Activated CD4-positive, alpha-beta T cell treated with anti-CD3 and anti-CD28 coated beads for 36 hours (primary cell): ENCODE measurements at regions of chr17 and their contacts with region 1.

Region 1: DNA sequence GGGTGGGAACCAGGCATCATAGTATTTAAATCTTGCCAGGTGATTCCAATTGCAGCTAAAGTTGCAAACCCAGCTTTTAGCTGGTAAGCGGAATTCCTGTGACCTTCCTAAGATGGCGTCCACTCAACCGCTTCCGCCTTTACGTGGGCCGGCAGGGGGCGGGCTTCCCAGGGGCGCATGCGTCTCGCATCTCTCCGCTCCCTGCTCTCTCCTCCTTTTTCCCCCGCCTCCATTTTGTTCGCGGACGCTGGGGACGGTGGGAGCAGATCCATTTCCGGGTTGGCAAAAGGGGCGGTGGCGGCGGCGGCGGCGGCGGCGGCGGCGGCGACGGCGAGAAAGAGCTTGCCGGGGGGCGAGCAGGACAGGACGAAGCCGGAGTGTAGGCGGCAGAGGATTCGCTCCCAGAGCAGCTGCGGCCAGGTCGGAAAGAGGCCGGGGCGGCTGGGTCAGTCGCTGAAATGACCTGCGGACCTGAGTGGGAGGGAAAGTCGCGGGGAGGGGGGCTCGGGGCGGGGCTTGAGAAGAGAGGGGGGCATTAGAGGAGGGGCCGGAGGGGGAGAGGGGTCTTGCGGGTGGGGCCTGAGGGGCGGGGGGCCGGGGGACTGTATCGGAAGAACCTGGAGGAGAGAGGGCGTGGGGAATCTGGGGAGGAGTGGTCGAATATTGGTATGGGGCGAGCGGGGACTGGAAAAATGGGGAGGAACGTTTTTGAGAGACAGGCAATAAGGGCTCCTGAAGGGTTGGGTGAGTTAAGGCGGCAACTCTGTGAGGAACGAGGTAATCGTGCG is at the start of gene WIPF2:
- DNase-seq: peak; percentile 98
- ATAC-seq: peak; percentile 96
- H3K4me3 Mint-ChIP-seq: peak within 1 kb of the TSS; percentile 89
- H3K27ac Mint-ChIP-seq: peak within 1 kb of the TSS; percentile 100
- H3K4me1 Mint-ChIP-seq: peaks cover 26% of the 10 kb centered on the region
- H3K27me3 Mint-ChIP-seq: no peaks in the 10 kb centered on the region
- total RNA-seq, gene WIPF2: 18.4 to 23.6 TPM

Region 2: DNA sequence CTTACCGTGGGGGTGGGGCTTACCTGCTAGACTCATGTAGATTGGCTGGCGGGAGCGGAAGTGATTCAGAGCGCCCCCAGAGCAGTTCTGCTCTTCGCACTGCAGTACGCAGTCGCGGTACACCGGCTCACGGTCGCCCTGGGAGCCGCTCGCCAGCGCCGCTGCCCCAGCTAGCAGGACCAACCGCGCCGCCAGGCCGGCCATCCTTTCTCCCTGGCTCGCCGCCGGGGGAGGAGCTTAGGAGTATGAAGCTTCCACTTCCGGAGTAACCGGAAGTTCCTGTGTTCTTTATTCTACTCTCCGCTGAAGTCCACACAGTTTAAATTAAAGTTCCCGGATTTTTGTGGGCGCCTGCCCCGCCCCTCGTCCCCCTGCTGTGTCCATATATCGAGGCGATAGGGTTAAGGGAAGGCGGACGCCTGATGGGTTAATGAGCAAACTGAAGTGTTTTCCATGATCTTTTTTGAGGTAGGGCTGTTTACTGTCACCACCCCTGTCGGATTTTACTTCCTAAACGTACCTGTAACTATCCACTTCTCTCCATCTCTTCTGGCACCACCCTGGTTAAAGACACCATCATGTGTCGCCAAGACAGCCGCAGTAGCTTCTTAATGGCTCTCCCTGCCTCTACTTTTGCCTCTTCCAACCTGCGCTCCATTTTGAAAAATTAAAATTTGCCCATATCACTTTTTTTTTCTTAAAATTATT is 531.3 kb before region 1 on chr17 and contains the start of gene PGAP3:
- CTCF ChIA-PET with region 1: no interaction called
- POLR2A ChIA-PET with region 1: no interaction called
- intact Hi-C with region 1: loop called in 1 of 2 experiments (anchors 5 kb)
- DNase-seq: peak; percentile 92
- ATAC-seq: peak; percentile 96
- H3K4me3 Mint-ChIP-seq: peak within 1 kb of the TSS; percentile 86
- H3K27ac Mint-ChIP-seq: peak within 1 kb of the TSS; percentile 95
- H3K4me1 Mint-ChIP-seq: peaks cover 19% of the 10 kb centered on the region
- H3K27me3 Mint-ChIP-seq: no peaks in the 10 kb centered on the region
- total RNA-seq, gene PGAP3: 8.6 to 11.9 TPM

Region 3: DNA sequence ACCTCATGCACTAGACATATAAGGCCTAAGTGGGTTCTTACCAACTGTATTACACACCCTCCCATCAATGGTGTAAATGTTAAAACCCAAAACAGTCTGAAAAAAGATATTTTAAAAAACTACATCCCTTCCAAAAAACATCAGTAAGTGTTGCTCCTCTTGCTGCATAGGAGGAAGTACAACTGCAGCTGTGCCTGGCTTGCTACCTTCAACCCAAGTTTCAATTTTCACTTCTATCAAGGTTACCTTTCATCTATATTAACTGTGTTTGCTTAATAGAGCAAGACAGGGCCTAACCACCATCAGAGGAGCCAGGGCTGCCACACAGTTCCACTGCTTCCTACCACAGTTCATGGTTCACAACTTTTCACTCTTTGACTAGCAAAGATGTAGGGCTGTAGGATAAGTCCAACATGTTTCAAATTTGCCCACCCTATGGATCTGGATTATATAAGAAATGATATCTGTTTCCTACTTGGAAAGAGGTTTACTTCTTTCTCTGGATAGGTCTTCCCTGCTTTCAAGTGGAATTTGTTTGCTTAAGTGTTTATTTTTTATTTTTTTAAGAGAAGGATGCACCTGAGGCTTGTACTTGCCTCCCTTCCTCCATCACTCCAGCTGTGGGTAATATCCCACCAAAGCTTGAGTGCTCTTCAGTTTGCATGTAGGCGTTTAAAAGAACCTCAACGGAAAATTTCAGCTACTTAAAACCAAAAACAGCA is 424.9 kb before region 1 on chr17:
- CTCF ChIA-PET with region 1: no interaction called
- POLR2A ChIA-PET with region 1: no interaction called
- intact Hi-C with region 1: no loop called
- DNase-seq: peak; percentile 33
- ATAC-seq: peak; percentile 14
- H3K4me3 Mint-ChIP-seq: no peak overlapping the region
- H3K27ac Mint-ChIP-seq: peak overlapping the region; percentile 82
- H3K4me1 Mint-ChIP-seq: peaks cover 76% of the 10 kb centered on the region
- H3K27me3 Mint-ChIP-seq: no peaks in the 10 kb centered on the region

Region 4: GRCh38 chr17:40139566-40140058 is 79.7 kb before region 1 on chr17:
- CTCF ChIA-PET with region 1: no interaction called
- POLR2A ChIA-PET with region 1: interaction called, 4 read pairs
- intact Hi-C with region 1: loop called in 1 of 2 experiments (anchors 1 kb)
- DNase-seq: no peak
- ATAC-seq: peak; percentile 5
- H3K4me3 Mint-ChIP-seq: peak overlapping the region; percentile 90
- H3K27ac Mint-ChIP-seq: peak overlapping the region; percentile 98
- H3K4me1 Mint-ChIP-seq: peaks cover 39% of the 10 kb centered on the region
- H3K27me3 Mint-ChIP-seq: no peaks in the 10 kb centered on the region

Region 5: GRCh38 chr17:40191237-40192208 is 27.7 kb before region 1 on chr17:
- CTCF ChIA-PET with region 1: interaction called, 11 read pairs
- POLR2A ChIA-PET with region 1: no interaction called
- intact Hi-C with region 1: no loop called
- DNase-seq: peak; percentile 84
- ATAC-seq: peak; percentile 91
- H3K4me3 Mint-ChIP-seq: peak overlapping the region; percentile 79
- H3K27ac Mint-ChIP-seq: peak overlapping the region; percentile 76
- H3K4me1 Mint-ChIP-seq: peaks cover 7% of the 10 kb centered on the region
- H3K27me3 Mint-ChIP-seq: no peaks in the 10 kb centered on the region

Region 6: GRCh38 chr17:40362696-40363110 is 143.4 kb after region 1 on chr17:
- CTCF ChIA-PET with region 1: interaction called, 4 read pairs
- POLR2A ChIA-PET with region 1: no interaction called
- intact Hi-C with region 1: loop called in 1 of 2 experiments (anchors 5 kb)
- DNase-seq: peak; percentile 95
- ATAC-seq: peak; percentile 91
- H3K4me3 Mint-ChIP-seq: peak overlapping the region; percentile 67
- H3K27ac Mint-ChIP-seq: no peak overlapping the region
- H3K4me1 Mint-ChIP-seq: peaks cover 20% of the 10 kb centered on the region
- H3K27me3 Mint-ChIP-seq: peaks cover 10% of the 10 kb centered on the region